Calu3 (cell line): ENCODE measurements at regions of chr12 and their contacts with region 1.

Region 1: GRCh38 chr12:10235761-10236631 is 23.3 kb downstream of the GABARAPL1 start:
- DNase-seq: peak; percentile 40
- H3K4me3 Mint-ChIP-seq: no peak overlapping the region
- H3K27ac Mint-ChIP-seq: no peak overlapping the region
- H3K4me1 Mint-ChIP-seq: no peaks in the 10 kb centered on the region
- H3K27me3 Mint-ChIP-seq: no peaks in the 10 kb centered on the region
- CTCF ChIP-seq: peak; percentile 82

Region 2: GRCh38 chr12:10331642-10332239 is 95.7 kb after region 1 on chr12:
- CTCF ChIA-PET with region 1: no interaction called
- intact Hi-C with region 1: loop called (anchors 5 kb)
- DNase-seq: peak; percentile 28
- H3K4me3 Mint-ChIP-seq: no peak overlapping the region
- H3K27ac Mint-ChIP-seq: no peak overlapping the region
- H3K4me1 Mint-ChIP-seq: peaks cover 17% of the 10 kb centered on the region
- H3K27me3 Mint-ChIP-seq: no peaks in the 10 kb centered on the region
- CTCF ChIP-seq: peak; percentile 53

Region 3: GRCh38 chr12:10364815-10365622 is 129.0 kb after region 1 on chr12:
- CTCF ChIA-PET with region 1: interaction called, 3 read pairs
- intact Hi-C with region 1: loop called (anchors 10 kb)
- DNase-seq: peak; percentile 72
- H3K4me3 Mint-ChIP-seq: no peak overlapping the region
- H3K27ac Mint-ChIP-seq: no peak overlapping the region
- H3K4me1 Mint-ChIP-seq: peaks cover 49% of the 10 kb centered on the region
- H3K27me3 Mint-ChIP-seq: no peaks in the 10 kb centered on the region
- CTCF ChIP-seq: no peak

Region 4: GRCh38 chr12:10491766-10492165 is 255.8 kb after region 1 on chr12:
- CTCF ChIA-PET with region 1: no interaction called
- intact Hi-C with region 1: loop called (anchors 5 kb)
- DNase-seq: no peak
- H3K4me3 Mint-ChIP-seq: no peak overlapping the region
- H3K27ac Mint-ChIP-seq: no peak overlapping the region
- H3K4me1 Mint-ChIP-seq: no peaks in the 10 kb centered on the region
- H3K27me3 Mint-ChIP-seq: no peaks in the 10 kb centered on the region
- CTCF ChIP-seq: no peak

Region 5: DNA sequence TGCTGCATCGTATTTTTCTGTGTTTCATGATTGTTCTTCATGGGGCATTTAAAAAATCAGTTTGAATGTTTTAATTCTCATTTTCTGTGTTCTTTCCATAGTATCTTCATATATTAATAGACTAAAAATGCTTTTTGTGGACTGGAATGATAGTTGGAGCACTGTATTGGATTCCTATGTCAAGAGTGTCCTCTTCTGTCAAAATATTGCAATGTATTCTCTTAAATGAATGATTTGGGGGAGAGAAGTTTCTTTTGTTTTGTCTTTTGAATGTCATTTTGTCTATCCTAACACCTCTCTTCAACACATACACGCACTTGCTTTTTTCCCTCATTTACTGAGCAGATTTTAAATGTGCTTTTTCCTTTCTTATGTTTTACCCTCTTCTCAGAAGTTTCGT is 265.0 kb after region 1 on chr12:
- CTCF ChIA-PET with region 1: no interaction called
- intact Hi-C with region 1: loop called (anchors 1 kb)
- DNase-seq: no peak
- H3K4me3 Mint-ChIP-seq: no peak overlapping the region
- H3K27ac Mint-ChIP-seq: no peak overlapping the region
- H3K4me1 Mint-ChIP-seq: no peaks in the 10 kb centered on the region
- H3K27me3 Mint-ChIP-seq: no peaks in the 10 kb centered on the region
- CTCF ChIP-seq: no peak

Region 6: DNA sequence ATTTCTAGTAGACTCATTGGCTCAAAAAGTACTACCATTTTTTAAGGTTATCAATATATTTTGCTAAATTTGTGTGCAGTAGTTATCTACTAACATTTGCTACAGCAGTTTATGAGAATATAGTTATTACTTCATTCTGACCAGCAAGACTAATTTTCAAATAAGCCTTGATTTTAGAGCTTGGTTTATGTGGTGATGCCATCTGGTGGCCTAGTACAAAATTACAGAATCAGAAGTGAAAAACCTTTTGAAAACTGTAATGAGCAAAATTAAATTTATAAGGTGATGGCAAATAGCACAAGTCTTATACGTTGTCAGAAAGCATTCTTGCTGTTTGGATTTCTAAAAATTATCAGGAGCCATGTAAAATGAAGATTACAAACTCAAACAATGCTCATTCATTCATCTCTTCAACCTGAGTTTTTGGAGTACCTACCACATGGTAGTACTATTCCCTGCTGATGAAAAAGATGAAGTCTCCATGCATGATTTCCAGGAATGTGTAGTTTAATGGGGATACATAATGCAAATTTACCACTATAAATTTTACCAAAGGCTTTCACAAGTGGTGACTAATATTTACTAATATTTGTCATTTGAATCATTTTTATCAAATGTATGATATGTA is 326.4 kb after region 1 on chr12:
- CTCF ChIA-PET with region 1: interaction called, 3 read pairs
- intact Hi-C with region 1: loop called (anchors 1 kb)
- DNase-seq: peak; percentile 45
- H3K4me3 Mint-ChIP-seq: no peak overlapping the region
- H3K27ac Mint-ChIP-seq: no peak overlapping the region
- H3K4me1 Mint-ChIP-seq: no peaks in the 10 kb centered on the region
- H3K27me3 Mint-ChIP-seq: no peaks in the 10 kb centered on the region
- CTCF ChIP-seq: peak; percentile 63